Endothelial cell of umbilical vein (primary cell): ENCODE measurements at regions of chr17 and their contacts with region 1.

Region 1: DNA sequence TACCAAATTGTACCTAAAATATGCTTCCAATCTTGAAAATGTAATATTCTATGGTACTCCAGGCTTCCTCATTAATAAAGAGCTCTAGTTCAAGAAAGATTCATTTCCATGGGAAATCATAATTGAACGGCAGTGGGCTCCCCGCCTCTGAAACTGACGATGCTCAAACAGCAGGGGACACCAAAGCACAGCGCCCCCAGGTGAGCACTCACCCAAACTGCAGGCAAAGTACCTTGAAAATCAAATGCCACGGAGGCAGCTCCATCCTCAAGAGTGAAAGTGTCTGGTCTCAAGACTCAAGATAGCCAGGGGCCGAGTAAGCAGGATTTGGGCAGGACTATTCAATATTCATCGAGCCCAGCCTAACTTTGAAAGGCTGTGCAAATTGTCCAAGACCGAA is 217.4 kb upstream of the TNRC6C start:
- DNase-seq: no peak
- H3K4me3 ChIP-seq: no peak overlapping the region
- H3K27ac ChIP-seq: no peak overlapping the region
- H3K4me1 ChIP-seq: no peaks in the 10 kb centered on the region
- H3K27me3 ChIP-seq: no peaks in the 10 kb centered on the region
- CTCF ChIP-seq: peak; percentile 25 to 38
- POLR2A ChIP-seq: no peak

Region 2: DNA sequence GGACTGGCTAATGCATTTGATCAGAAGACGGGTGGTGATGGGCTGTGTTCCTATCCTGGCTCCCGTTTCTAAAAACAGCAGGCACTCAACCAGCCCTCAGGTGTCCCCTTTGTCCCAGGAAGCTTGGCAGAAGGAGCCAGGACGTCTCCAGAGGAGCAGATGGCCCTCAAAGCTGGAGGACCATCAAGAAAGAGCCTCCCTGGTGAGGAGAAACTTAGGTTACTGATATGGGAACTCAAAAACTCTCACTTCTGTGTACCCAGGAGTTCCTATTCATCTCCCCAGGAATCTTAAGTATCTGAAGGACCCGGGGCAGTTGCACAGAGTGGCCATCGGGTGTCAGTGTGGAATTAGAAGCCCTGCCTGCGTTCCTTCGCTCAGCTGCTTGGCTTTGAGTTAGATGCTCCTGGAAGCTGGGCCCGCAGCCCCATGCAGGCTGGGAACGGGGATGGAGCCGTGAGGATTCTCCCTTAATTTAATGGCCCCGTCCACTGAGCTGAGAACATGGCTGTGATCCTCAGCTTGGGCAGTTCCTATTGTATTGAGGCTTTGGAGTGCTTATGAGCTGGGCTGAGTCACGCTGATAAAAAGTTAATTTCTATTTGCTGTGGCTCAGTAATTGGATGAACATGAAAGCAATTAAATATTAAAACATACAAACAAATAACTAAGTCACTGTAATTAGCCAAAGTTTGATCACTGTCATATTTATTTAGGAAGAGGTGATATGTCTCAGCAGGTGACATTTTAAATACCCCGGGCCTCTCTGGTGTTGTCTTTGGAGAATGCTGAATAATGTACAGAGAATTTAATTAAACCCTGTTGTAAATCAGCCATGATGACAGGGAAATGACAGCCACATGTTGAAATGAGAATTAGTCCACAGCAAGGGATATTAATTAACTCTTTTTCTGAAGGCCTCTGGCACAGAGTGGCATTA is 198.3 kb before region 1 on chr17:
- CTCF ChIA-PET with region 1: interaction called, 7 read pairs
- POLR2A ChIA-PET with region 1: no interaction called
- dilution Hi-C with region 1: no loop called
- intact Hi-C with region 1: loop called (anchors 5 kb)
- DNase-seq: peak; percentile 71
- H3K4me3 ChIP-seq: no peak overlapping the region
- H3K27ac ChIP-seq: no peak overlapping the region
- H3K4me1 ChIP-seq: no peaks in the 10 kb centered on the region
- H3K27me3 ChIP-seq: peaks cover 28 to 30% of the 10 kb centered on the region in 2 experiments
- CTCF ChIP-seq: peak; percentile 84 to 87
- POLR2A ChIP-seq: no peak